Caco-2 (cell line): ENCODE measurements at regions of chrX and their contacts with region 1.

Region 1: DNA sequence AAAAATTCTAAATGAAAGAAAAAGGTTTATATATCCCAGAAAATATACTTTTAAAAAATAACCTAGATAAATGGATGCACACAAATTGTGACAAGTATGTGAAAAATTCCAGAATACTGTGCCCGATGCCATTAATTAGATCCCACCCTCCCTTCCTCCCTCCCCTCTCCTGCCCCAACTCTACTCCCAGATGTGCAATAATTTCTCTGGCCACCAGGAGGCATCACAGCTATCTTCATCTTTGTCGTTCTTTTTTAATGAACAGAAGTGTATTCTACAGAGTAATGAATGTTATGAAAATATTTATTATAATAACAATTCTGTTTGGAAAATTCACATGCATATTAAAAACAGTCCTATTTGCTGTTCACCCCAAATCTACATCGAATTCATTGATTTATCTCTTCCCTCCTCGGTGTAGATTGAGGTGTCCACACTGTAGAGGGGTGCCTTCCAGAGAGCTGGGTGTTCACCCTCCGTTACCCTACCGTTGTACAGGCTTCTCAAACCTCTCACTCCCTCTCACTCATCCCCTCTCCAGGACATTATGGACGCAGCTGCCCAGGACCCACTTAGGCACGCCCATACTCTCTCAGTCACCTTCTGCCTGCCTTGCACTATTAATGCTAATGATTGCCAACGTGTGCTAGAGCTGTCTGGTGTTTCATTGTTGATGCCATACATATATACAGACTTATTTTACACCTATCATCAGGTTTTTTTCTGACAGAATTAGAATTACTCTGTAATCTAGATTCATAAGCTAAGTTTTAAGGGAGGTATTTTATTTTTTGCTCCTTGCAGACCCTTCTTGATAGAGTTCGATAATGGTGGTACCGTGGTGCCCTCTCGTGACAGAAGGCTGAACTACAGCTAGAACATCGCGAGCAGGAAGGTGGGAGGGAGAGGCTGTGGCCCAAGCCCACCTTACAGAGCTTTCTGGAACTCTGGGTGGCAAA is 14.1 kb downstream of the RAB40AL start:
- DNase-seq: peak; percentile 47 to 57
- H3K4me3 ChIP-seq: no peak overlapping the region
- H3K4me3 Mint-ChIP-seq: peak overlapping the region; percentile 67
- H3K27ac Mint-ChIP-seq: no peak overlapping the region
- H3K4me1 ChIP-seq: no peaks in the 10 kb centered on the region
- H3K4me1 Mint-ChIP-seq: peaks cover 5% of the 10 kb centered on the region
- H3K27me3 ChIP-seq: no peaks in the 10 kb centered on the region
- H3K27me3 Mint-ChIP-seq: no peaks in the 10 kb centered on the region
- CTCF ChIP-seq: peak; percentile 54 to 56

Region 2: DNA sequence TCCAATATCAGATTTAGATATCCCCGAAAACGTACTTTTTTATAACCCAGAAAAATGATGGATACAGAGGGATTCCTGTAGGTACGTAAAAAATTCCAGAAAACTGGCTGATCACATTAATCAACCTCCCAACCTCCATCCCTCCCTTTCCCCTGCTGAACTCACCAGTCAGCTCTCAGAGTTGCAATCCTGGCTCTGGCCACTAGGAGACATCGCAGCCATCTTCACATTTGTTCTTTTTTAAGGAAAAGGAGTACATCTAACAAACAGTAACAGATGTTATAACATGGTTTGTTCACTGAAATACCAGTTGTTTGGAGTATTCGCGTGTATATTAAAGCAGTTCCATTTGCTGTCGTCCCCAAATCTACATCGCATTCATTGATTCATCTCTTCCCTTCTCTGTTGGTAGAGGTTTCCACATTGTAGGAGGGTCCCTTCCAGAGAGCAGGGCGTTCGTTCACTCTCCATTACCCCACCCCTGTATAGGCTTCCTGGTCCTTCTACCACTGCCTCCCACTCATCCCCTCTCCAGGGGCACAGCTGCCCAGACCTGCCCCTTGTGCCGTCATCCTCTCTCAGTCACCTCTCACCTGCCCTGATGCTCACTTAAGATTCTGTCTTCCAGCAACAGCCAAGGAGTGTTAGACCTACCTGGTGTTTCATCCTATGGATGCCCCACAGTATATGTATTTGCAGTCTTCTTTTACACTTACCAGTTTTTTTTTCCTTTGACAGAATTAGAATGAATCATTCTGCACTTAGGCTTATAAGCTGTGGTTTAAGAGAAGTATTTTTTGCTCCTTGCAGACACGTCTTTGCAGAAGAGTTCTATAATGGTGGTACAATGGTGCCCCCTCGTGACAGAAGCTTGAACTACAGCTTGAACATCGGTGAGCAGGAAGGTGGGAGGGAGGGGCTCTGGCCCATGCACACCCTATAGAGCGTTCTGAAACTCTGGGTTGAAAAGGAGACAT is 51.0 kb before region 1 on chrX:
- CTCF ChIA-PET with region 1: interaction called, 19 read pairs
- POLR2A ChIA-PET with region 1: no interaction called
- intact Hi-C with region 1: loop called (anchors 5 kb)
- DNase-seq: peak; percentile 51 to 66
- H3K4me3 ChIP-seq: no peak overlapping the region
- H3K4me3 Mint-ChIP-seq: no peak overlapping the region
- H3K27ac Mint-ChIP-seq: no peak overlapping the region
- H3K4me1 ChIP-seq: no peaks in the 10 kb centered on the region
- H3K4me1 Mint-ChIP-seq: no peaks in the 10 kb centered on the region
- H3K27me3 ChIP-seq: no peaks in the 10 kb centered on the region
- H3K27me3 Mint-ChIP-seq: no peaks in the 10 kb centered on the region
- CTCF ChIP-seq: peak; percentile 38 to 55

Region 3: GRCh38 chrX:102934624-102935023 is 16.6 kb before region 1 on chrX:
- CTCF ChIA-PET with region 1: interaction called, 10 read pairs
- POLR2A ChIA-PET with region 1: no interaction called
- intact Hi-C with region 1: no loop called
- DNase-seq: peak in 1 of 2 experiments; percentile 10
- H3K4me3 ChIP-seq: no peak overlapping the region
- H3K4me3 Mint-ChIP-seq: no peak overlapping the region
- H3K27ac Mint-ChIP-seq: peak overlapping the region; percentile 63
- H3K4me1 ChIP-seq: no peaks in the 10 kb centered on the region
- H3K4me1 Mint-ChIP-seq: peaks cover 7% of the 10 kb centered on the region
- H3K27me3 ChIP-seq: no peaks in the 10 kb centered on the region
- H3K27me3 Mint-ChIP-seq: no peaks in the 10 kb centered on the region
- CTCF ChIP-seq: peak; percentile 46 to 53

Region 4: GRCh38 chrX:103157496-103158320 is 206.5 kb after region 1 on chrX:
- CTCF ChIA-PET with region 1: no interaction called
- POLR2A ChIA-PET with region 1: no interaction called
- intact Hi-C with region 1: loop called (anchors 2 kb)
- DNase-seq: peak in 1 of 2 experiments; percentile 34
- H3K4me3 ChIP-seq: no peak overlapping the region
- H3K4me3 Mint-ChIP-seq: no peak overlapping the region
- H3K27ac Mint-ChIP-seq: no peak overlapping the region
- H3K4me1 ChIP-seq: no peaks in the 10 kb centered on the region
- H3K4me1 Mint-ChIP-seq: no peaks in the 10 kb centered on the region
- H3K27me3 ChIP-seq: no peaks in the 10 kb centered on the region
- H3K27me3 Mint-ChIP-seq: no peaks in the 10 kb centered on the region
- CTCF ChIP-seq: peak; percentile 52 to 63

Region 5: DNA sequence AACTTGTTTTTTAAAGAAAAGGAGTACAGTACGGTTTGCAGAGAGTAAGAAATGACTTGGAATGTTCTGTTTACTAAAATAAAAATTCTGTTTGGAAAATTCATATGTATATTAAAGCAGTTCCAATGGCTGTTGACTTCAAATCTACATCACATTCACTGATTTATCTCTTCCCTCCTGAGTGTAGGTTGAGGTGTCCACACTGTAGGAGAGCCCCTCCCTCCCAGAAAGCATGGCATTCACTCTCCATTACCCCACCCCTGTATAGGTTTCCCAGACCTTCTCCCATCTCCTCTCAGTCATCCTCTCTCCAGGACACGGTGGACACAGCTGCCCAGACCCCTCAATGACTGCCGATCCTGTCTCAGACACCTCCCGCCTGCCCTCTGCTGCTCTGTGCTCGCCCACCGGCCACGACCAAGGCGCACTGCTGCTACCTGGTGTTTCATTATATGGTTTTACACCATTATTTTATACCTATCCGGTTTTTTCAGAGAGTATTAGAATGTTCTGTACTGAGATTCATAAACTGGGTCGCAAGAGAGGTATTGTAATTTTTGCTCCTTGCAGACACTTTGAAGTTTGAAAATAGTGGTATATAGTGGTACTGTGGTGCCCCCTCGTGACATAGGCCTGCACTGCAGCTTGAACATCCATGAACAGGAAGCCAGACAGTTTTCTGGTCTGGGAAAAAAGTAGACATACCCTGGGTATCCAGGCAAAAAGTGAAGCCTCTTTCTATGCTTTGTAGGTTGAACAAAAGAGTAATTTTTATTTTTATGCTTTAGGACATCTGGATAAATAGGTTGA is 225.0 kb after region 1 on chrX:
- CTCF ChIA-PET with region 1: interaction called, 13 read pairs
- POLR2A ChIA-PET with region 1: no interaction called
- intact Hi-C with region 1: loop called (anchors 1 kb)
- DNase-seq: peak; percentile 39 to 54
- H3K4me3 ChIP-seq: no peak overlapping the region
- H3K4me3 Mint-ChIP-seq: no peak overlapping the region
- H3K27ac Mint-ChIP-seq: no peak overlapping the region
- H3K4me1 ChIP-seq: no peaks in the 10 kb centered on the region
- H3K4me1 Mint-ChIP-seq: peaks cover 5% of the 10 kb centered on the region
- H3K27me3 ChIP-seq: no peaks in the 10 kb centered on the region
- H3K27me3 Mint-ChIP-seq: peaks cover 6% of the 10 kb centered on the region
- CTCF ChIP-seq: peak; percentile 64 to 72